H1 (cell line): ENCODE measurements at regions of chr19 and their contacts with region 1.

Region 1: DNA sequence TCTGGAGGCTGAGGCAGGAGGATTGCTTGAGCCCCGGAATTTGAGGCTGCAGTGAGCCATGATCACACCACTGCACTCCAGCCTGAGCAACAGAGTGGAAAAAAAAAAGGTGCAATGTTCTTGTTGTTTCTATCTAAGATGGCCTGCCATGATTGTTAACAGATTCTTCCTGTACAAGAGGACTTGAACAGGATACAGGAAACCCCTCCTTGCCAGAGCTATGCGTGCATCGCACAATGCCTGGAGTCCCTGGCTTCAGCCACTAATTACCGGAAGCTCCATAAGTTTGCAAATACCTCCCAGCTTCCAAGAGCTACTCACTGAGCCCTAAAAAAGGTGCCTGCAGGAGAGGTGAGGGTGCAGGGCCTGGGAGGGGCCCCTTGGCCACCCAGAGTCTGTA is 13.1 kb upstream of the HIF3A start:
- DNase-seq: no peak
- H3K4me3 ChIP-seq: no peak overlapping the region
- H3K27ac ChIP-seq: no peak overlapping the region
- H3K4me1 ChIP-seq: peaks cover 0 to 3% (median 3%) of the 10 kb centered on the region in 4 experiments; a peak in 5 of 7 replicates
- H3K27me3 ChIP-seq: no peaks in the 10 kb centered on the region
- CTCF ChIP-seq: no peak
- EP300 ChIP-seq: no peak
- POLR2A ChIP-seq: no peak
- RAD21 ChIP-seq: no peak

Region 2: GRCh38 chr19:46254776-46255175 is 29.0 kb before region 1 on chr19:
- CTCF ChIA-PET with region 1: no interaction called
- POLR2A ChIA-PET with region 1: no interaction called
- DNase-seq: no peak
- H3K4me3 ChIP-seq: no peak overlapping the region
- H3K27ac ChIP-seq: no peak overlapping the region
- H3K4me1 ChIP-seq: no peaks in the 10 kb centered on the region
- H3K27me3 ChIP-seq: no peaks in the 10 kb centered on the region
- CTCF ChIP-seq: no peak
- EP300 ChIP-seq: no peak
- POLR2A ChIP-seq: no peak
- RAD21 ChIP-seq: no peak

Region 3: GRCh38 chr19:46265217-46265828 is 18.4 kb before region 1 on chr19:
- CTCF ChIA-PET with region 1: interaction called, 11 read pairs
- POLR2A ChIA-PET with region 1: no interaction called
- DNase-seq: peak; percentile 79 to 82
- H3K4me3 ChIP-seq: no peak overlapping the region
- H3K27ac ChIP-seq: no peak overlapping the region
- H3K4me1 ChIP-seq: peaks cover 0 to 3% (median under 1%) of the 10 kb centered on the region in 4 experiments; a peak in 3 of 7 replicates
- H3K27me3 ChIP-seq: no peaks in the 10 kb centered on the region
- CTCF ChIP-seq: peak; percentile 50 to 96 (median 70)
- EP300 ChIP-seq: no peak
- POLR2A ChIP-seq: no peak
- RAD21 ChIP-seq: peak; percentile 95 to 96

Region 4: DNA sequence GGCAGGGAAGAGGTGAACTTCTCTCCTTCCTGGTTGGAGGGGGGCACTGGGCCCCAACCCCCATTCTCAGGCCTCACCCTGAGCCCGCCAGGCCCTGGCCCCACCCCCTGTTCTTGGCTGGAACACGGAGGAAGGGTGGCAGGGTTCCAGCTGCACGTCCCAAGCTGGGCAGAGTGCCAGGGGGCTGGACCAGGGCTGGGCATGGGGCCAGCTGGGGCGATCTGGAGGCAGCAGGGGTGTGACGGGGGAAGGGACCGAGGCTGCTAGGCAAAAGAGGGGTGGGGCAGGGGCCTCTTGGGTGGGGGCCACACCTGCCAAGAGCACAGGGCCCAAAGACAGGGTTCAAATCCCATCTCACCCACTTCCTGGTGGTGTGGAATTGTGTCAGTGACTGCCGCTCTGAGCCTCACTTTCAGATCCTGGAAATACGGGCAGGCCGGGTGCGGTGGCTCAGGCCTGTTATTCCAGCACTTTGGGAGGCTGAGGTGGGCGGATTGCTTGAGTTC is 15.3 kb after region 1 on chr19:
- CTCF ChIA-PET with region 1: interaction called, 145 read pairs
- POLR2A ChIA-PET with region 1: interaction called, 7 read pairs
- DNase-seq: no peak
- H3K4me3 ChIP-seq: peak overlapping the region in 2 of 4 experiments; percentile 26 to 88; a peak in 3 of 8 replicates
- H3K27ac ChIP-seq: no peak overlapping the region
- H3K4me1 ChIP-seq: peaks cover 6 to 44% (median 34%) of the 10 kb centered on the region in 4 experiments
- H3K27me3 ChIP-seq: peaks cover 0 to 2% (median 0%) of the 10 kb centered on the region in 4 experiments; a peak in 1 of 7 replicates
- CTCF ChIP-seq: no peak
- EP300 ChIP-seq: no peak
- POLR2A ChIP-seq: no peak
- RAD21 ChIP-seq: no peak

Region 5: GRCh38 chr19:46346821-46347571 is 63.2 kb after region 1 on chr19 and contains the start of gene PPP5C:
- CTCF ChIA-PET with region 1: interaction called, 14 read pairs
- POLR2A ChIA-PET with region 1: no interaction called
- DNase-seq: peak; percentile 78 to 92
- H3K4me3 ChIP-seq: peak within 1 kb of the TSS; percentile 70 to 95 (median 84)
- H3K27ac ChIP-seq: peak within 1 kb of the TSS; percentile 91
- H3K4me1 ChIP-seq: peaks cover 3 to 16% (median 5%) of the 10 kb centered on the region in 4 experiments
- H3K27me3 ChIP-seq: no peaks in the 10 kb centered on the region
- CTCF ChIP-seq: peak; percentile 99
- EP300 ChIP-seq: no peak
- POLR2A ChIP-seq: peak; percentile 79 to 82
- RAD21 ChIP-seq: peak; percentile 43 to 62
- total RNA-seq, gene PPP5C: 105 and 112 TPM in 2 replicates

Region 6: DNA sequence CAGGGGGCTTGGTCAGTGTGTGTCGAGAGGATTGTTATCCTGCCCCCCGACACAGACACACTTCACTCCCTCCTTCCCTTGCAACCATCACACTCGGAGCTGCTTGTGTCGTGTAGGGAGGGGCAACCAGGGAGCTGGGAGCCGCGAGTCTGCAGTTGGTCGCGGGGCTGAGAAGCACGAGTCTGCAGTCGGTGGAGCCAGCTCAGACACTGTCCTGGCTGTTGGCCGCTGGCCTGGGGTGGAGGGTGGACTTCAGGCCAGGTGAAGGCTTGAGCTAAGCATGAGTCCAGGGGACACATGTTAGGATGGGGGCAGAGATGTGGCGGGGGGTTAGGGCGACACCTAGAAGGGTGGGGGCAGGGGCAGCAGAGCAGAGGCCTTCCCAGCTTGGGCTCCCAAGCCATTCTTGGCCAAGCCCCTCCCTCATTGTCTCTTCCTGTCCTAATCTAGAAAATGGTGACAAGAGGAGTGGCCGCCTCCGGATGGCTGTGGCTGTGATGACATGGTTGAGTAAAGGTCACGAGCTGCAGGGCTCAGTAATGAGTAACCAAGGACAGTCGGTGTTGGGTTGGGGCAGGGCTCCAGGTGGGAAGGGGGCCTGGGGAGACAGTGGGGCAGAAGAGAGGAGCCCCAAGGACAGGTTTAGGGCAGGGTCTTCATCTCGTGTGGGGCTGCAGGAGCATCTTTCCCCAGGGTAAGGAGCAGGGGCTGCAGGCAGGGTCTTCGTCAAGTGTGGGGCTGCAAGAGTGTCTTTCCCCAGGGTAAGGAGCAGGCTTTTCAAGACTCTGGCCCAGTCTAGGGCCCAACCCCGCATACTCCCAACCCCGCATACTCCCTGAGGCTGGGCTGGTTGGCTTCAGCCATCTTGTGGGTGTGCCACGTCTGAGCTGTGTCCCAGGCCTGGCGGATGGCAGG is 71.7 kb after region 1 on chr19:
- CTCF ChIA-PET with region 1: interaction called, 14 read pairs
- POLR2A ChIA-PET with region 1: no interaction called
- DNase-seq: no peak
- H3K4me3 ChIP-seq: no peak overlapping the region
- H3K27ac ChIP-seq: no peak overlapping the region
- H3K4me1 ChIP-seq: peaks cover 0 to 6% (median 2%) of the 10 kb centered on the region in 4 experiments; a peak in 4 of 7 replicates
- H3K27me3 ChIP-seq: no peaks in the 10 kb centered on the region
- CTCF ChIP-seq: no peak
- EP300 ChIP-seq: no peak
- POLR2A ChIP-seq: no peak
- RAD21 ChIP-seq: no peak

Region 7: GRCh38 chr19:46368116-46368515 is 84.3 kb after region 1 on chr19:
- CTCF ChIA-PET with region 1: interaction called, 19 read pairs
- POLR2A ChIA-PET with region 1: no interaction called
- DNase-seq: no peak
- H3K4me3 ChIP-seq: no peak overlapping the region
- H3K27ac ChIP-seq: no peak overlapping the region
- H3K4me1 ChIP-seq: peaks cover 5 to 16% (median 9%) of the 10 kb centered on the region in 4 experiments
- H3K27me3 ChIP-seq: no peaks in the 10 kb centered on the region
- CTCF ChIP-seq: no peak
- EP300 ChIP-seq: no peak
- POLR2A ChIP-seq: no peak
- RAD21 ChIP-seq: no peak

Region 8: GRCh38 chr19:46373421-46374359 is 89.9 kb after region 1 on chr19:
- CTCF ChIA-PET with region 1: interaction called, 19 read pairs
- POLR2A ChIA-PET with region 1: no interaction called
- DNase-seq: peak; percentile 62 to 73
- H3K4me3 ChIP-seq: peak overlapping the region in 3 of 4 experiments; percentile 5 to 42 (median 19); a peak in 5 of 8 replicates
- H3K27ac ChIP-seq: peak overlapping the region; percentile 84
- H3K4me1 ChIP-seq: peaks cover 14 to 30% (median 21%) of the 10 kb centered on the region in 4 experiments
- H3K27me3 ChIP-seq: no peaks in the 10 kb centered on the region
- CTCF ChIP-seq: peak in 1 of 3 experiments; percentile 17; a peak in 1 of 4 replicates
- EP300 ChIP-seq: no peak
- POLR2A ChIP-seq: peak in 1 of 2 experiments; percentile 51; a peak in 1 of 3 replicates
- RAD21 ChIP-seq: no peak